Activated CD4-positive, alpha-beta T cell treated with anti-CD3 and anti-CD28 coated beads for 36 hours (primary cell): ENCODE measurements at regions of chr17 and their contacts with region 1.

Region 1: DNA sequence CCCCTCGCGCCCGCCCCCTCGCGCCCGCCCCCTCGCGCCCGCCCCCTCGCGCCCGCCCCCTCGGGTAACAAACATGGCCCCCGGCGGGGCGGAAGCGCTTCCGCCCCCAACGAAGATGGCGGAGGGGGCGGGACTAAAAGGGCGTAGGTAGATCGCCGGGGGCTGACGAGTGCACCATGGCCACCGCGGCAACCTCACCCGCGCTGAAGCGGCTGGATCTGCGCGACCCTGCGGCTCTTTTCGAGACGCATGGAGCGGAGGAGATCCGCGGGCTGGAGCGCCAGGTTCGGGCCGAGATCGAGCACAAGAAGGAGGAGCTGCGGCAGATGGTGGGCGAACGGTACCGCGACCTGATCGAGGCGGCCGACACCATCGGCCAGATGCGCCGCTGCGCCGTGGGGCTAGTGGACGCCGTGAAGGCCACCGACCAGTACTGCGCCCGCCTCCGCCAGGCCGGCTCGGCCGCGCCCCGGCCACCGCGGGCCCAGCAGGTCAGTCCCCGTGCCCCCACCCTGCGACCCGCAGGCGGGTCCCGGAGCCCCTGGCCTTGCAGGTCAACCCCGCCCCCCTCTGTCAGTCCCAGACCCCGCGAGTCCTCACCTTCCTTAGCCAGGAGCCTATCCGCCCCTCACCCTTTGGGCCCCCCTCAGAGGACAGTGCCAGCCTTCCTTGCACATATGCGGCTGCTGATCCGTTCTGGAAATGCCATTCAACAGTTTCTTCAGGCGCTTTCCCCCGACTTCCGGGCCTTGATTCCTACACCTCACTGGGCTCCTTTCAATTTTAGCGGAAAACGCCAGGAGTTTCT is at the start of gene COG1:
- DNase-seq: peak; percentile 91
- ATAC-seq: peak; percentile 78
- H3K4me3 Mint-ChIP-seq: peak within 1 kb of the TSS; percentile 91
- H3K27ac Mint-ChIP-seq: peak within 1 kb of the TSS; percentile 97
- H3K4me1 Mint-ChIP-seq: peaks cover 18% of the 10 kb centered on the region
- H3K27me3 Mint-ChIP-seq: no peaks in the 10 kb centered on the region
- total RNA-seq, gene COG1: 25.6 to 39.0 TPM

Region 2: DNA sequence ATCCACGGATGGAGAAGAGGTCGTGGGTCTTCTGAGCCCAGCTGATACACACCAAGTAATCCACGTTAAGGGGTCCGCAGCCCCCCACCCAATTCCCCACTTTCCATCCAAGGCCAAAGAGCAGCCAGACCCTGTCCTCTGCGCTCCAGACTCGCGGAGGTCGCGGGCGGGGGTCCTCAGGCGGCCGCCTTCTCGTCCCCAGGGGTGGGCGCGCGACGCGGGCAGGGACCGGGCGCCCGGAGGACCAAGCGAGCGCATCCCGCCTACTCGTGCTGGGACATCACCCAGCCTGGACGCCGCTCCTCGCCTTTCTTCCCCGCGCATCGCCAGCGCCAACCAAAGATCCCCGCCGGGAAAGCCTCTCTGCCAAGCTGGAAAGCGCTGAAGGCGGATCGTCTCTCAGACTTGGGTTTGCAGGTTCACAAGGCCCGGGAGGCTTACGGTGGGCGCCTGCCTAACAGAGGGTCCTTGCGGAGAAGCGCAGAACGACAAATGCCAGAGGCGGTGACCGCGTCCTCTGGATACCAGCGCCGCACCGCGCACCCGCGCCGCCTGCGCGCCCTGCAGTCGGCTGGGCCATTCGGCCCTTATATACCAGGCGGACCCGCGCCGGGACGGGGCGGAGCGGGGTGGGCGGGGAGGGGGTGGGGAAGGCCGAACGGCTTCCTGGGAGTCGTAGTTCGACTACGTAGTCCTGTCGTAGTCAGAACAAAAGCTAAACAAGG is 600.7 kb before region 1 on chr17:
- CTCF ChIA-PET with region 1: no interaction called
- POLR2A ChIA-PET with region 1: no interaction called
- intact Hi-C with region 1: loop called in 1 of 2 experiments (anchors 1 kb)
- DNase-seq: peak; percentile 79
- ATAC-seq: peak; percentile 80
- H3K4me3 Mint-ChIP-seq: peak overlapping the region; percentile 75
- H3K27ac Mint-ChIP-seq: peak overlapping the region; percentile 71
- H3K4me1 Mint-ChIP-seq: peaks cover 27% of the 10 kb centered on the region
- H3K27me3 Mint-ChIP-seq: peaks cover 44% of the 10 kb centered on the region

Region 3: DNA sequence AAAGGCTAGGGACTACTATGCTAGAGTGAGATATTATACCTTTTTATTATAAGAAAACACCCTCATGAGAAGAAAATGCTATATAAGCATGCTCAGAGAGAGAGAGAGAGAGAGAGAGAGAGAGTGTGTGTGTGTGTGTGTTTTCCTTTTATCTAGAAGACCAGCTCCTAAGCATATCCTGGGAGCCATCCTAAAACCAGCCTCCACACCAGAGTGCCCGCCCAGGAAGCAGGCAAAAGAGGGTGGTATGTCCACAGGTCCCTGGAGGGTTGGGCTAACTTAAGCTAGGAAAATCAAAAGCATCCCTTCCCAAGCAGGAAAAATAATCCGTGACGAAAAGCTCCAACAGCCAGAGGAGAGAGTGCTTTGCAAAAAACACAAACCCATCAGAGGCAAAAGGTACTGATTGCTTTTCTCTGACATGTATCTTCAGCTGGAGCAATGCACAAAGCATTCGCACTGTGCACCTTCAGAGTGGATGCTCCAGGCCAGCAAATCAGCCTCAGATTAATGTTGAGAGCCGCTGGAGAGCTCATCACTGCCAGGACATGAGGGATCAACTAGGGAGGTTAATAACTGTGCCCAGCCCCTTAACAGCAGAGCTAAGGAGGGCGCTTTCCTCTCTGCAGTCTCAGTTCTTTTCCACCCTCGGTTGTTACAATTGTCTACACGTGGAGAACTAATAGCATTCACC is 225.7 kb before region 1 on chr17:
- CTCF ChIA-PET with region 1: no interaction called
- POLR2A ChIA-PET with region 1: no interaction called
- intact Hi-C with region 1: no loop called
- DNase-seq: no peak
- ATAC-seq: no peak
- H3K4me3 Mint-ChIP-seq: no peak overlapping the region
- H3K27ac Mint-ChIP-seq: no peak overlapping the region
- H3K4me1 Mint-ChIP-seq: no peaks in the 10 kb centered on the region
- H3K27me3 Mint-ChIP-seq: no peaks in the 10 kb centered on the region

Region 4: GRCh38 chr17:73092523-73093135 is 100.5 kb before region 1 on chr17 and contains the start of gene SLC39A11:
- CTCF ChIA-PET with region 1: interaction called, 3 read pairs
- POLR2A ChIA-PET with region 1: no interaction called
- intact Hi-C with region 1: loop called in 1 of 2 experiments (anchors 1 kb)
- DNase-seq: peak; percentile 95
- ATAC-seq: peak; percentile 99
- H3K4me3 Mint-ChIP-seq: peak within 1 kb of the TSS; percentile 94
- H3K27ac Mint-ChIP-seq: peak within 1 kb of the TSS; percentile 87
- H3K4me1 Mint-ChIP-seq: peaks cover 24% of the 10 kb centered on the region
- H3K27me3 Mint-ChIP-seq: peaks cover 2% of the 10 kb centered on the region
- total RNA-seq, gene SLC39A11: 12.5 to 17.2 TPM